Ascending aorta (tissue), 2 donors: ENCODE measurements at regions of chr19 and their contacts with region 1.

Region 1: GRCh38 chr19:12035220-12036153 is at the start of gene ZNF433:
- DNase-seq: peak; percentile 75 to 97
- H3K4me3 ChIP-seq: peak within 1 kb of the TSS; percentile 68 to 74
- H3K27ac ChIP-seq: peak within 1 kb of the TSS; percentile 74 to 84
- H3K4me1 ChIP-seq: peaks cover 0 to 5% of the 10 kb centered on the region in 2 donors
- H3K27me3 ChIP-seq: no peaks in the 10 kb centered on the region
- CTCF ChIP-seq: no peak
- total RNA-seq, gene ZNF433: not detected

Region 2: DNA sequence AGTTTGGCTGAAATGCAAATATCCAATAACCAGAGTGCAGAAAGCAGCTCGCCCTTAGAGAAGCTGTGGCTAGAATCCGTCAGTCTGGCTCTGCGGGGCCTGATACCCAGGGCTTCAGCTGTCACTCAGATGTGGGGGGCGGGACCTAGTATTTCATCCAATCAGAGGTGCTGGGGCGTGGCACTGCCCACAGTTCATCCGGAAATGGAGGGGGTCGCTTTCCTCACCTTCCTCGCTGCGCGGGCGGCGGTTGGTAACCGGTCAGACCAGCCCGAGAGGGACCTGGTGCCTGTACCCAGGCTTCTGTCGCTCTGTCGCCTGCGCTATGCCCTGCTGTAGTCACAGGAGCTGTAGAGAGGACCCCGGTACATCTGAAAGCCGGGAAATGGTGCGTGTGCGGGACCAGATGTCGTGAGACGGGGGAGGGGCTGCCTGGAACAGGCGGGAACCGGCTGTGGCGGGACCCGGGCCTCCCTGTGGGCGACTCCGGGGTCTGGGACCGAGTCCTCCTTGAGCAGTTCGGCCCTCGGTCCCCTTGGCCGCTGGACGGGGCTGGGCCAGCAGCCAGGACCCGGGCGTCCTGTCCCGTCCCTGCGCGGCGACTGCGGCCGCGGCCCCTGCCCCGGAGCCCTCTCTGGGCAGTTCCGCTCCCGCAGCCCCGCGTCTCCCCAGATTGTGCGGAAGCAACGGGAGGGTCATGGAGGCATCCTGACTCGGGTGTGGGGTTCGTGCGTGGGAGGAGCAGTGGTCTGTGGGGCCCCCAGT is 110.4 kb before region 1 on chr19 and contains the start of gene ZNF700:
- intact Hi-C with region 1: loop called (anchors 5 kb)
- DNase-seq: peak; percentile 77 to 97
- H3K4me3 ChIP-seq: peak within 1 kb of the TSS; percentile 84 to 88
- H3K27ac ChIP-seq: peak within 1 kb of the TSS; percentile 92 to 93
- H3K4me1 ChIP-seq: peaks cover 3 to 10% of the 10 kb centered on the region in 2 donors
- H3K27me3 ChIP-seq: no peaks in the 10 kb centered on the region
- CTCF ChIP-seq: no peak
- total RNA-seq, gene ZNF700: 4.4 TPM

Region 3: GRCh38 chr19:12052497-12053169 is 17.1 kb after region 1 on chr19 and contains the start of gene ZNF878:
- intact Hi-C with region 1: loop called (anchors 1 kb)
- DNase-seq: peak; percentile 63 to 93
- H3K4me3 ChIP-seq: peak within 1 kb of the TSS; percentile 77 to 83
- H3K27ac ChIP-seq: peak within 1 kb of the TSS; percentile 59 to 65
- H3K4me1 ChIP-seq: peaks cover 0 to 2% of the 10 kb centered on the region in 2 donors
- H3K27me3 ChIP-seq: no peaks in the 10 kb centered on the region
- CTCF ChIP-seq: peak in 2 of 3 experiments; percentile 7 to 11
- total RNA-seq, gene ZNF878: not detected